GM12878 (cell line): ENCODE measurements at regions of chr10 and their contacts with region 1.

Region 1: GRCh38 chr10:62637249-62638061 is 167.1 kb upstream of the ADO start:
- DNase-seq: peak; percentile 81
- ATAC-seq: peak; percentile 79
- H3K4me3 ChIP-seq: peak overlapping the region; percentile 12
- H3K27ac ChIP-seq: peak overlapping the region; percentile 95
- H3K4me1 ChIP-seq: peaks cover 85% of the 10 kb centered on the region
- H3K27me3 ChIP-seq: no peaks in the 10 kb centered on the region
- CTCF ChIP-seq: no peak
- EP300 ChIP-seq: peak; percentile 23 to 60; a peak in 3 of 4 replicates
- POLR2A ChIP-seq: peak; percentile 61
- RAD21 ChIP-seq: no peak

Region 2: GRCh38 chr10:62618576-62619412 is 18.7 kb before region 1 on chr10:
- CTCF ChIA-PET with region 1: interaction called, 9 read pairs
- POLR2A ChIA-PET with region 1: interaction called, 24 read pairs
- RAD21 ChIA-PET with region 1: interaction called, 10 read pairs
- SMC1A ChIA-PET with region 1: interaction called, 122 read pairs
- in situ Hi-C with region 1: no loop called
- intact Hi-C with region 1: loop called (anchors 2 kb)
- DNase-seq: no peak
- ATAC-seq: peak; percentile 58
- H3K4me3 ChIP-seq: no peak overlapping the region
- H3K27ac ChIP-seq: 0 out of 2 replicates have a peak overlapping the region, but pooled peaks have one; percentile 2
- H3K4me1 ChIP-seq: peaks cover 30% of the 10 kb centered on the region
- H3K27me3 ChIP-seq: no peaks in the 10 kb centered on the region
- CTCF ChIP-seq: no peak
- EP300 ChIP-seq: no peak
- POLR2A ChIP-seq: no peak
- RAD21 ChIP-seq: no peak

Region 3: DNA sequence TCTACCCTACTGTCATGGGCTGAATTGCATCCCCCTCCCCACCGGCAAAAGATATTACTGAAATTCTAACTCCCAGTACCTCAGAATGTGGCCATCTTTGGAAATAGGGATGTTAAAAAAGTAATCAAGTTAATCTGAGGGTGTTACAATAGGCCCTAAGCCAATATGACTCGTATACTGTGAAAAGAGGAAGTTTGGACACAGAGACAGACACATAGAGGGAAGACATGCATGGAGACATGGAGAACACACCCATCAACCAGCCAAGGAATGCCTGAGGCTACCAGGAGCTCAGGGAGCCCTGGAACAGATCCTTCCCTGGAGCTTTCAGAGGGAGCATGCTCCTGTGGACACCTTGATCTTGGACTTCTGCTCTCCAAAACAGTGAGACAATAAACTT is 28.8 kb after region 1 on chr10:
- CTCF ChIA-PET with region 1: interaction called, 12 read pairs
- POLR2A ChIA-PET with region 1: interaction called, 6 read pairs
- RAD21 ChIA-PET with region 1: interaction called, 24 read pairs
- SMC1A ChIA-PET with region 1: interaction called, 22 read pairs
- in situ Hi-C with region 1: no loop called
- intact Hi-C with region 1: no loop called
- DNase-seq: no peak
- ATAC-seq: peak; percentile 19; the same call in 1 of the 3 replicates
- H3K4me3 ChIP-seq: no peak overlapping the region
- H3K27ac ChIP-seq: no peak overlapping the region
- H3K4me1 ChIP-seq: peaks cover 4% of the 10 kb centered on the region; the same call in 1 of the 2 replicates
- H3K27me3 ChIP-seq: no peaks in the 10 kb centered on the region
- CTCF ChIP-seq: no peak
- EP300 ChIP-seq: no peak
- POLR2A ChIP-seq: no peak
- RAD21 ChIP-seq: no peak

Region 4: GRCh38 chr10:62769574-62770242 is 132.3 kb after region 1 on chr10:
- CTCF ChIA-PET with region 1: no interaction called
- POLR2A ChIA-PET with region 1: no interaction called
- RAD21 ChIA-PET with region 1: interaction called, 19 read pairs
- SMC1A ChIA-PET with region 1: interaction called, 10 read pairs
- in situ Hi-C with region 1: no loop called
- intact Hi-C with region 1: no loop called
- DNase-seq: no peak
- ATAC-seq: peak; percentile 87
- H3K4me3 ChIP-seq: no peak overlapping the region
- H3K27ac ChIP-seq: peak overlapping the region; percentile 56
- H3K4me1 ChIP-seq: peaks cover 31% of the 10 kb centered on the region
- H3K27me3 ChIP-seq: no peaks in the 10 kb centered on the region
- CTCF ChIP-seq: no peak
- EP300 ChIP-seq: no peak
- POLR2A ChIP-seq: no peak
- RAD21 ChIP-seq: no peak

Region 5: GRCh38 chr10:62811159-62811875 is 173.9 kb after region 1 on chr10:
- CTCF ChIA-PET with region 1: interaction called, 6 read pairs
- POLR2A ChIA-PET with region 1: interaction called, 7 read pairs
- RAD21 ChIA-PET with region 1: interaction called, 64 read pairs
- SMC1A ChIA-PET with region 1: interaction called, 82 read pairs
- in situ Hi-C with region 1: no loop called
- intact Hi-C with region 1: loop called (anchors 1 kb)
- DNase-seq: peak; percentile 85
- ATAC-seq: peak; percentile 62
- H3K4me3 ChIP-seq: peak overlapping the region; percentile 25; the same call in 1 of the 2 replicates
- H3K27ac ChIP-seq: peak overlapping the region; percentile 42; the same call in 1 of the 2 replicates
- H3K4me1 ChIP-seq: peaks cover 20% of the 10 kb centered on the region
- H3K27me3 ChIP-seq: no peaks in the 10 kb centered on the region
- CTCF ChIP-seq: no peak
- EP300 ChIP-seq: peak; percentile 80 to 86; a peak in 3 of 4 replicates
- POLR2A ChIP-seq: 0 out of 2 replicates have a peak, but pooled peaks have one; percentile 21
- RAD21 ChIP-seq: 0 out of 2 replicates have a peak, but pooled peaks have one; percentile 6